ENCODE measurements at regions of chr2 and their contacts with region 1.

Region 1: GRCh38 chr2:224369028-224369632 is 32.8 kb downstream of the FAM124B start:
- DNase-seq: no peak
- H3K4me3 ChIP-seq: no peak overlapping the region
- CTCF ChIP-seq: peak; percentile 46

Region 2: DNA sequence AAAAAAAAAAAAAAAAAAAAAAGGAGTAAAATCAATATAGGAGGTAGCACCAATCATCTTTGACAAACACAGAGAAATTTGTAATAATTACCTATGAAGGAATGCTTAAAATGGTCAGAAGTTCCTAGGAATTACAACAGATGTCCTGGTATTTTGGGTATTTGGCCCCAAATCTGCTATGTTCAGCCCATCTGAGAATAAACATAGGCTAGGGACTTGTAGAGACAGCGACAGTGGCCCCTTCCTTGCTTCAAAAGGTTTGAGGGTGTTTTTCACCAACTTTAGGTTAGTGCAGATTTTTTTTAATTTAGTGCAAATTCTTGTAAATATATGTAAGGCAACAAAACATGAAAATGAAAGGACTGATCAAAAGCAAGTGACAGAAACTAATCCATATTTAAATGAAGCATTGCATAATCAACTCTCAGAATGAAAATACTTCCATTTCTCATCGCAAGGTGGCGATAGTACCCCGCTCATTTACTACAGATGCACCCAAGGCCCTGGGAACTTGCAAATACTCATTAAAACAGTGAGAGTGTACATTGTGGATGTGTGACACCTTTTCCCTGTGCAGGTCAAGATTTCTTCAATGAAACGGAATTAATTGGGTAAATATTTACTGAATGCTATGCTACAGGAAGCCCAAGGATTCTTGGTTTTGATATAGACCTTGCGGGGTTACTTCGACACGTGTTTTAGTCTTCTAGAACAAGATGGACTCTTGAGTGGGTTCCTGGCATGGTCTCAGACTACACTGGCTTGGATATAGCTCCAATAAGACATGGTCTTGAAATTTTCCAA is 11.8 kb before region 1 on chr2:
- CTCF ChIA-PET with region 1: interaction called, 42 read pairs
- POLR2A ChIA-PET with region 1: no interaction called
- DNase-seq: no peak
- H3K4me3 ChIP-seq: no peak overlapping the region
- CTCF ChIP-seq: peak; percentile 53

Region 3: GRCh38 chr2:224392545-224392944 is 23.4 kb after region 1 on chr2:
- CTCF ChIA-PET with region 1: interaction called, 45 read pairs
- POLR2A ChIA-PET with region 1: no interaction called
- DNase-seq: no peak
- H3K4me3 ChIP-seq: no peak overlapping the region
- CTCF ChIP-seq: no peak

Region 4: DNA sequence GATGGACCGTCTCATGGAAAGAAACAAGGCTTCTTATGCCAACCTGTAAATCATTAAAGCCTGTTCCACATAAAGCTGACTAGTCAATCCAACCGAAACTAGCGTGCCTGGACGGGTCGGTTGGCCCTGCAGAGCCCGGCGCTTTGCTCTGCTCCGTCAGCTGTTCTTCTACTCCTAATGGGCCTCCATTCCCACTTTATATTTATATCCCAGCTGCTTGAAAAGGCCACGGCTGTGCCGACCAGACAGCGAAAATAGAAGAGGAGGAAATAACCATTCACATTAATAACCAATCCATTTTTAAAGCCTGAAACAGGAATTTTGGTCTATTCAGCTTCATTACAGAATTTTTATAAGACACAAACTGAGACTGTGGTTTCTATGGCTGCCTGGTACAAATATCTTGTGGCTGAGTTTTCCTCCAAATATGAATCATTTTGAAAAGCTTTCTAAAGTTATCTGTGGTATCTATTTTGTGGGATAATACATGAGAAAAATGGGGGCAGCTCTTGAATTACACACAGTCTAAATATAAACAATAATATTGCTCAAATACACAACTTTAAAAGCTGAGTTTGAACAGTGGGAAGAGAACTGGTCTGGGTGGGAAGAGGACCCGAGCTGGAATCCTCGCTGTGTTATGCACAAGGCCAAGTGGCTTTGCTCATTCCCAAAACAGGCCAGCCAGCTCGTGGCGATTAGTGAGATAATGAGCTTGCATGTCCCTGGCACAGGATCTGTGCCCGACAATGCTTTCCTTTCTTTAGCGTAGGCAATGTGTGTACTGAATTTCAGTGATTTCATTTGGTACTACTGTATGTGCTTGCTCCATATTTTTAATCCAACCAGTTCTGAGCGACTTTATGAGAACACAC is 43.2 kb after region 1 on chr2:
- CTCF ChIA-PET with region 1: interaction called, 14 read pairs
- POLR2A ChIA-PET with region 1: no interaction called
- DNase-seq: no peak
- H3K4me3 ChIP-seq: peak overlapping the region; percentile 15
- CTCF ChIP-seq: no peak

Measured in AG04449 (cell line).